ENCODE measurements at regions of chr12 and their contacts with region 1.

Region 1: GRCh38 chr12:51836041-51836826 is 12.3 kb downstream of the FIGNL2 start:
- DNase-seq: peak; percentile 46
- H3K27ac ChIP-seq: no peak overlapping the region
- CTCF ChIP-seq: no peak

Region 2: DNA sequence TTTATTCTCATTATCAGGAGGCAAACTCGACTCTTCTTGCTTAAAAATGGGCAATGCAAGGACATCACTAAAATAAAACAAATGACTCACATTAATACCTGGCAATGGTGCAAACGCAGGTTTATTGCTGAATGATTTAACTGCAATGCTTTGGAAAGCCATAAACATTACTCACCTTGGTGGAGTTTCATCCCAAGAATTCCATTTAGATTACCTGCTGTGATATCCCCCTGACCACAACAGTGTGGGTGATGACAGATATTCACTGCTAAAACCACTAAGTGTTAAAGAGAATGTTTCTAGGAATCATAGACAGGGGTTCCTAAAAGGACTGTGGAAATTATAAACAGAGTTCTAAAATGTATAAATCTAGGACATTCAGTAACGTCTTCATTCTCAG is 717.5 kb before region 1 on chr12:
- CTCF ChIA-PET with region 1: interaction called, 13 read pairs
- POLR2A ChIA-PET with region 1: no interaction called
- DNase-seq: peak; percentile 94
- H3K27ac ChIP-seq: peak overlapping the region; percentile 81
- CTCF ChIP-seq: no peak

Region 3: DNA sequence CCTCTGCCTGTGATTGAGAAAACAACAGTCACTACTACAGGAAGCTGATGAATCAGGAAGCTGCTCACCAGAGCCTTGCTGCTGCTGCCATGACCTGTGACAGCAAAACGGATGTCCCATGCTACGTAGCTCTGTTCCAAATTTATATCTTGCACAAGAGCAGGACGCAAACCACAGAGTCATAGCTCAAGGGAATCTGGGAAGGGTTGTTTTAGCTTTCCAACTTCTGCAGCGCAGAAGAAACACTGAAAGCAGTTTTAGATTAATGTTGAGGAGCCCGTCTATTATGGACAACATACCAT is 49.7 kb after region 1 on chr12:
- CTCF ChIA-PET with region 1: no interaction called
- POLR2A ChIA-PET with region 1: no interaction called
- DNase-seq: peak; percentile 55
- H3K27ac ChIP-seq: no peak overlapping the region
- CTCF ChIP-seq: no peak

Region 4: DNA sequence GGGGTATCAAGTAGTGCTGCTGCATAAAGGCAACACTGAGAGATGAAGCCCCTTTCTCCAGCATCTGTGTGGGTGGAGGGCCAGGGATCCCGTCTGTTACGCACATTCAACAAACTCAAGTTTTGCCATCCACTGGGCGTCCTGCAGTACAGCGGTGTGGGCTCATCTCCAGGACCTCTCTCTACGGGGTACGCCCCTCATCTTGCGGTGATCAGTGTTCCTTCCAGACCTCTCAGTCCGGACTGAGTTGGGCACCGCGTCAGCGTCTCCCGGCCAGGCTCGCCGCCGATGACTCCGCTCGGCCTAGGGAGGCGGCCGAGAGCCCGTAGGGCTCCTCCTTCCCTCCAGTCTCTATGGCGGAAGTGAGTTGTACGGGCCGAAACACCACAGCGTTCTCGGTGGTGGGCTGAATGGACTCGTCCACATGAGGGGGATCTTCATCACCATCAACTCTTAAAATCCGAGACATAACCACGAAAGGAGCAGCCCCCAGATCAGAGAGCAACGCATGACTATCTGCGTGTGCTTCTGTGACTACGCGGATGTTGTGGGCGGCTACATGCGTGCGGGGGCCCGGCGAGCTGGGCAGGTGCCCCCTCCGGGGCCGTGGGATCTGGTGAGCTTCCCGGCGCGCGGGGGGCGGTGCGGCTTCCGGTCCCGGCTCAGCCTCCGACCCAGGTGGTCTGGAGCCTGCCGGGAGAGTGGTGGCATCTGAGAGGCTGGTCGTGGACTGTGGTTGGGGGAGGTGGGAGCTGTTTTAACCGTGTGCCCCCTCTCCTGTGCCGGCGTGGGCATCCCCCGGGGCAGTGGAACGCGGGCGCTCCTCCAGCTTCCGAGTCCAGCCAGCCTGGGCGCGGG is 233.3 kb after region 1 on chr12 and contains the start of gene ATG101:
- CTCF ChIA-PET with region 1: no interaction called
- POLR2A ChIA-PET with region 1: no interaction called
- DNase-seq: peak; percentile 95
- H3K27ac ChIP-seq: peak within 1 kb of the TSS; percentile 78
- CTCF ChIP-seq: peak; percentile 88

Region 5: GRCh38 chr12:52534487-52534886 is 698.3 kb after region 1 on chr12:
- CTCF ChIA-PET with region 1: no interaction called
- POLR2A ChIA-PET with region 1: no interaction called
- DNase-seq: no peak
- H3K27ac ChIP-seq: no peak overlapping the region
- CTCF ChIP-seq: no peak

Measured in RWPE1 (cell line).